Activated T-helper 1 cell treated with anti-CD3 and anti-CD28 coated beads, Interleukin-12 subunit alpha, Interleukin-12 subunit beta, Interleukin-2, Interleukin-4 antibody, amounts not matched to agents 30 ng/mL and 10 ng/mL and 1 ng/mL, durations not matched to agents 14 hours and 24 hours and 36 hours (primary cell): ENCODE measurements at regions of chr4 and their contacts with region 1.

Region 1: DNA sequence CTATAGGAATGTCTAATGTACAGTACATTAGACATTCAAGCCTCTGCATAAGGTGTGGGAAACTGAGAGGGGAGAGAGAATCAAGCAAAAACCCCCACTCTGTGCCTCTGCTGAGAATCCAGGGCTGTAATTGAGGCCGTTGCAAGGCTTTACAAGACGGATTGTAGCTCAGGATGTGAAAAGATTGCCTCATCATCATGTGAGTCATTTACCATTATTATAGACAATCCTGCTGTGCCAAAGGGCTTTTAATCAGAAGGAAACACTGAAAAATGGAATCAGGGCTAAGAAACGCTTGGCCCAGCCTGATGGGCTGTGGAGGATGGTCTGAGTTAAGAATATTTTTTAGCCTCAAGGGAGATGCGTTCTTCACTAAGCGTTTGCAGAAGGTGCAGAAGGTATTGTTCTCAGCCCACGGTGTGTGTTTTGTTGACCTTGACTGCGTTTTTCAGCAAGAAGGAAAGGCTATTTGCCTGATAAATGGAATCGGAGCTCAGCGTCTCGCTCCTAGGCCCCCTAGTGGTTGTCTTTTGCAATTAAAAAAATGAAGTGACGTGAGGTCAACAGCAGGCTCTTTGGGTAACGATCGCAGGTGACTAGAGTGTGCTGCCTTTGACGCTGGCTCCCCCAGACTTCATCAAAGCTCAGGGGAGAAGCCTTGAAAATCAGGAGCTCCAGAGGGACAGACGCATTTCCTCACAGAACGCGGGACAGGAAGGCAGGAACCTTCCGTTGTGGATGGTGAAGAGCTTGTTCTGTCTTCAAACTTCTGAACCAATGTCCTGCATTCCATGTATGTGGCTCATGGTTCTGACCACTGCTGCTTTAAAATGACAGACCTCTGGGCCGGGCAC is 18.1 kb upstream of the CHRNA9 start:
- DNase-seq: peak; percentile 59
- H3K4me3 Mint-ChIP-seq: peak overlapping the region; percentile 83
- H3K27ac Mint-ChIP-seq: peak overlapping the region; percentile 99
- H3K4me1 Mint-ChIP-seq: peaks cover 58% of the 10 kb centered on the region
- H3K27me3 Mint-ChIP-seq: no peaks in the 10 kb centered on the region

Region 2: DNA sequence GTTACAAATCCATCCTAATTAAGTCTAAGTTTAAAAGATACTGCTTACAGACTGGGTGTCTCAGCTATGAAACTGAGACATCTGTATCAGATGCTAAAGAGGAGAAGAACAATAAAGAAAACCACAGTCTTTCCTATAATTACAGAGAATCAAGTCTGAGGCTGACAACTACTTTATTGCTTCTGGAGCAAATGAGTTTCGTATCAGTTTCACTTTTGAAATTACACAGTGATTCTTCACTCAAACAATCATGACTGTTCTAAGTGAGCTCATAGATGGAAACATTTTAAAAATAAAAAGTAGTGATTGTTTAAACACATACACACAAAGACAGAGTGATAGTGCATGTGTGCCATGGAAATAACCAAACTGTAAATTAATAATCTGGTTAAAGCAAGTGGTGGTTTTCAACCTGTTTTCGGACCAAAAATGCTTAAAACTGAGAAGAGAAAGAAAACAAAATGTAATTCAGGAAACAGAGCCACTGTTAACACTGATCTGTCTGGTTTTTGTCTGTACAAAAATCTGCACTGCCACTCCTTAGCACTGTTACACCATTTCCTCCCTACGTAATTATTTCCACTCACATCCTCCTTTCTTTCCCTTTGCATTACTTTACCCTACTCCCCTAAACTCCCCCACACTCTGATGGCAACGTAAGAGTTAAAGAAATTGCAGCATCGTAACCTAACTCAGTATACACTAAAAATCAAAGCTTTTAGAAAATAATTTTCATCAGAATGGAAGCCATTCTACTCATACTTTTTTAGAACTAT is 963.3 kb before region 1 on chr4:
- intact Hi-C with region 1: loop called (anchors 10 kb)
- DNase-seq: peak; percentile 32
- H3K4me3 Mint-ChIP-seq: peak overlapping the region; percentile 80
- H3K27ac Mint-ChIP-seq: peak overlapping the region; percentile 96
- H3K4me1 Mint-ChIP-seq: peaks cover 63% of the 10 kb centered on the region
- H3K27me3 Mint-ChIP-seq: no peaks in the 10 kb centered on the region

Region 3: GRCh38 chr4:40185830-40186664 is 131.0 kb before region 1 on chr4:
- intact Hi-C with region 1: loop called (anchors 1 kb)
- DNase-seq: no peak
- H3K4me3 Mint-ChIP-seq: no peak overlapping the region
- H3K27ac Mint-ChIP-seq: no peak overlapping the region
- H3K4me1 Mint-ChIP-seq: peaks cover 48% of the 10 kb centered on the region
- H3K27me3 Mint-ChIP-seq: no peaks in the 10 kb centered on the region

Region 4: DNA sequence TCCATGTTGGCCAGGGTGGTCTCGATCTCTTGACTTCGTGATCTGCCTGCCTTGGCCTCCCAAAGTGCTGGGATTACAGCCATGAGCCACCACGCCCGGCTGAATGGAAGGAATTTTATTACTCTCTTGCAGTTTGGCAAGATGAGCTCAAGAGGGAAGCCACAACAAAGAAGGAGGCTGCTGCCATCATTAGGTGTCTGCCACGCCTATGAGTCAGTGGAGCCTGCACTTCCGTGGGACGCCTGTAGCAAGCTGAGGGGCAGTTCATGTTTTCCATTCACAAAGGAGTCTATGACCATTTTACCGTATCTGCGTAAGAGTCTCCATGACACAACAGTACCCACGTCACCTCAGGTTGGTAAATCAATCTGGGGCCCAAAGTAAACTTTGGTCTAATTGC is 33.0 kb before region 1 on chr4:
- intact Hi-C with region 1: loop called (anchors 1 kb)
- DNase-seq: peak; percentile 54
- H3K4me3 Mint-ChIP-seq: peak overlapping the region; percentile 32
- H3K27ac Mint-ChIP-seq: peak overlapping the region; percentile 84
- H3K4me1 Mint-ChIP-seq: peaks cover 56% of the 10 kb centered on the region
- H3K27me3 Mint-ChIP-seq: no peaks in the 10 kb centered on the region

Region 5: DNA sequence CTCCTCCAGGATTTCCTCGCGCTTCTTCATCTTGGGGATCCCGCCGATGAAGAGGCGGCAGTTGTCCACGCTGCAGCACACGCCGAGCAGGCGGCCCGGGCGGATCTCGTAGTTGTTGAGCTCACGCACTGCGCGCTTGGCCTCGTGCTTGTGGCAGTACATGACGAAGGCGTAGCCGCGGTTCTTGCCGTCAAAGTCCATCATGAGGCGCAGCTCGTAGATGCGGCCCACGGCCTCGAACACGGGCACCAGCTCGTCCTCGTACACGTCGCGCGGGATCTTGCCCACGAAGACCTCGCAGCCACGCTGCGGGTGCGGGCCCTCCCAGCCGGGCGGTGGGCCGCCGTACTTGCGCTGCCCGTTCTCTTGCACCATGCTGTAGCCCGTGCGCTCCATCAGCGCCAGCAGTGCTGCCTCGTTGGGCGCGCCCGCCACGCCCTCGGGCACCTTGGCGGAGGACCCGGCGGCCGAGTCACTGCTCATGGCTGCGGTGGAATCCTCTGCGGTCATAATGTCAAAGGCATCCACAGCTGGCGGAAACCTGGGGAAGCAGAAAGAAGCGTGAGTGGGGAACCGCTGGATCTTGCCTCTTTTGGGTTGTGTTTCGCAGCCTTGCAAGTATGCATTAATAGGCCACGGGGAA is 121.5 kb after region 1 on chr4:
- intact Hi-C with region 1: no loop called
- DNase-seq: no peak
- H3K4me3 Mint-ChIP-seq: peak overlapping the region; percentile 3
- H3K27ac Mint-ChIP-seq: peak overlapping the region; percentile 8
- H3K4me1 Mint-ChIP-seq: peaks cover 54% of the 10 kb centered on the region
- H3K27me3 Mint-ChIP-seq: no peaks in the 10 kb centered on the region

Region 6: DNA sequence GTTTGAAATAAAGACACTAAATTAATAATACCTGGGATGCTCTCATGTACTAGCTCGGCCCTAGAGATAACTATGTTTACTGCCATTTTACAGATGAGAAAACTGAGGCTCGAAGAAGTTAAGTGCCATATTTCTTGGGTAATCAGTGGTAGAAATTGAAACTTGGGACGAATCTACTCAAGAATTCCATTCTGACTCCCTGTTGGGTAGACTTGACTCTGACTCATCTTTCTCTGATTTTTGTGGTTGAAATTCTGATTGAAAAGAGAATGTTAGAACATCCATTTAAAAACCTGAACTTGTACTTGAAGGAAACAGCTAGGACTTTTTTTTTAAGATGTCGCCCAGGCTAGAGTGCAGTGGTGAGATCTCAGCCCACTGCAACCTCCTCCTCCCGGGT is 382.6 kb after region 1 on chr4:
- intact Hi-C with region 1: loop called (anchors 1 kb)
- DNase-seq: no peak
- H3K4me3 Mint-ChIP-seq: peak overlapping the region; percentile 7
- H3K27ac Mint-ChIP-seq: peak overlapping the region; percentile 74
- H3K4me1 Mint-ChIP-seq: peaks cover 34% of the 10 kb centered on the region
- H3K27me3 Mint-ChIP-seq: no peaks in the 10 kb centered on the region